Mammary epithelial cell (primary cell): ENCODE measurements at regions of chr17 and their contacts with region 1.

Region 1: GRCh38 chr17:58541249-58541648 is 26.8 kb upstream of the MTMR4 start:
- DNase-seq: no peak
- H3K4me3 ChIP-seq: no peak overlapping the region
- H3K27ac ChIP-seq: no peak overlapping the region
- H3K4me1 ChIP-seq: no peaks in the 10 kb centered on the region
- H3K27me3 ChIP-seq: no peaks in the 10 kb centered on the region
- CTCF ChIP-seq: peak; percentile 40 to 61

Region 2: GRCh38 chr17:58985971-58986370 is 444.7 kb after region 1 on chr17:
- CTCF ChIA-PET with region 1: interaction called, 12 read pairs
- dilution Hi-C with region 1: no loop called
- in situ Hi-C with region 1: no loop called
- intact Hi-C with region 1: no loop called
- DNase-seq: no peak
- H3K4me3 ChIP-seq: no peak overlapping the region
- H3K27ac ChIP-seq: no peak overlapping the region
- H3K4me1 ChIP-seq: no peaks in the 10 kb centered on the region
- H3K27me3 ChIP-seq: no peaks in the 10 kb centered on the region
- CTCF ChIP-seq: no peak